Dendritic cell treated with granulocyte-macrophage colony-stimulating factor and Interleukin-4, amounts not matched to agents 40 ng/mL and 50 ng/mL, for 4 days (primary cell): ENCODE measurements at regions of chr5 and their contacts with region 1.

Region 1: GRCh38 chr5:64811050-64811640 is 42.4 kb downstream of the CWC27 start:
- H3K4me3 Mint-ChIP-seq: no peak overlapping the region
- H3K27ac Mint-ChIP-seq: no peak overlapping the region
- H3K4me1 Mint-ChIP-seq: no peaks in the 10 kb centered on the region
- H3K27me3 Mint-ChIP-seq: no peaks in the 10 kb centered on the region

Region 2: DNA sequence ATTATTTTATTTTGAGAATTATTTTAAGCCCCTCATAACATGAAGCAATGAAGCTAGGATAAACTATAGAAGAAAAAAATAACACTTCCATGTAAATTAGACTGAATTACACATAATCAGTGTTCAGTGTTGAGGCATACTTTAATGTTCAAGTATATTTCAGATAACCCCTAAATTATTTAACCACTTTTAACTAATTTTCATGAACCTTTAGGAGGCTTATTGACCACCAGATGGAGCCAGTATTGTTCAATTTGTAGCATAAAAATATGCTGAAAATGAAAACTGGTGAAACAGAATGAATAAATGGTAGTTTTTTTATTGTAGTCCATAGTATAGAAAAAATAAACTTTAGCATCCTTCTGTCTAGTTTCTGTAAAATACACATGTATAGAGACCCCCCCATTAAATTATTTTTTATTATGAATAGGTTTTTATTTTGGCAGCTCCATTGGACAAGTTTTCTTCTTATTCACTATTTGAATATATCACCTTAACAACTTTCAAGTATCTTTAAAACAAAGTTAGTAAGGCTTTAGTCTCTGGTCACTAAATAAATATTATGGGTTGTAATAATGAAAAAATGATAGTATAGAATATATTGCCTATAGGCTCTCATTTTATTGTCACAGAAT is 147.7 kb after region 1 on chr5:
- intact Hi-C with region 1: loop called (anchors 2 kb)
- H3K4me3 Mint-ChIP-seq: no peak overlapping the region
- H3K27ac Mint-ChIP-seq: no peak overlapping the region
- H3K4me1 Mint-ChIP-seq: peaks cover 5% of the 10 kb centered on the region
- H3K27me3 Mint-ChIP-seq: no peaks in the 10 kb centered on the region

Region 3: GRCh38 chr5:65102828-65103711 is 291.9 kb after region 1 on chr5:
- intact Hi-C with region 1: no loop called
- H3K4me3 Mint-ChIP-seq: peak overlapping the region; percentile 75
- H3K27ac Mint-ChIP-seq: peak overlapping the region; percentile 79
- H3K4me1 Mint-ChIP-seq: peaks cover 27% of the 10 kb centered on the region
- H3K27me3 Mint-ChIP-seq: peaks cover 25% of the 10 kb centered on the region

Region 4: GRCh38 chr5:65588694-65589093 is 777.5 kb after region 1 on chr5:
- intact Hi-C with region 1: loop called (anchors 10 kb)
- H3K4me3 Mint-ChIP-seq: no peak overlapping the region
- H3K27ac Mint-ChIP-seq: no peak overlapping the region
- H3K4me1 Mint-ChIP-seq: no peaks in the 10 kb centered on the region
- H3K27me3 Mint-ChIP-seq: no peaks in the 10 kb centered on the region